Activated CD4-positive, alpha-beta T cell treated with anti-CD3 and anti-CD28 coated beads for 36 hours (primary cell): ENCODE measurements at regions of chr1 and their contacts with region 1.

Region 1: DNA sequence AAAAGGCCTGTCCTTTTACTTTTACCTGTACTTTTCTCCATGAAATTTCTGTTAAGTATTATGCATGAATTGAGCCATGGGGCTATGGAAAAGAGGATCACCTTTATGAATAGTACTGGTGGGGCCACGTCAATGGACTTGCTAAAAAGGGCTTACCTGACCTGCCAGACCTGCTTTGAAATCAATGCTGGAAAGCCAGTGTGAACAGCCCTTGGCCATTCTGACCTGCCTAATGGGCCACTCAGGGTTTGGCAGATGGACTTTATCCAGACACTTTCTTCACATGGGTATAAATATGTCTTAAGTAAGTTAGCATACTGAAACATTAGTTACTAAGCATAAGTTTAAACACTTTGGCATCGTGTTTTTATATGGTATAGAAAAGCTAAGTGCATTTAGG is 8.3 kb upstream of the GUK1 start:
- DNase-seq: no peak
- ATAC-seq: no peak
- H3K4me3 Mint-ChIP-seq: no peak overlapping the region
- H3K27ac Mint-ChIP-seq: no peak overlapping the region
- H3K4me1 Mint-ChIP-seq: peaks cover 3% of the 10 kb centered on the region
- H3K27me3 Mint-ChIP-seq: peaks cover 5% of the 10 kb centered on the region

Region 2: DNA sequence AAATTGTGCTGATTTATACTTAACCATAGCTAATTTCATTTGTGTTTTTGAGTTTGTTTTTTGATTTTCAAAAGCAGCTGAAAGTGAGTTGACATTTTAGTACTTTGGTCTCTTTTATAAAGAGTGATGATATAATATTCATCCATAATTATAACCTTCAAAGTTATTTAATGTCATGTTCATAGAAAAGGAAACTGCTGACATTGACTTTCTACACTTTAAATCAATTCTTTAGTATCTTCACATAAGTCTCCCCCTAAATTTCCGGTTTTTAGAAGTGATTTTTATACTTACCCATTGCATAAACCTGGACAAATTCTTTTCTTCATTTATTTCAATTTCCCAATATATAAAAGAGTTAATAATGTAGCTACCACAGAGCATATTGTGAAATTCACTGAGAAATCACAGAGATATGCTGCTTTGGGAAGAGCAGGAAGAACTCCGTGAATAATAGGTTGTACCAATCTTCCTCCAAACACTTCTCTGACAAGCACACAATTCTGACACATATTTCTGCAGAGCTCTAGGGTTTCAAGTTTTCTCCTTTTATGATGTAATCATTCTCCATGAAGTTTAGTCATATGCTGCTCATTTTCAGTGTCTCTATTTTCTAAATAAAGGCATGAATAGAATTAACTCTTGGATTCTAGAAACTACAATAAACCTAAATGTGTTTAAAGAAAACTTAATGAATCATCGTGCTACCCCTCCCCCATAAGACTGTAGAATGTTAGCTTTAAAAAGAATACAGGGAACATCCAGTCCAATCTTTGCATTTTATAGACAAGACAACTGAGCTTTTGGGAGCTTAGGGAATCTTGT is 787.8 kb before region 1 on chr1:
- CTCF ChIA-PET with region 1: no interaction called
- POLR2A ChIA-PET with region 1: no interaction called
- intact Hi-C with region 1: no loop called
- DNase-seq: no peak
- ATAC-seq: no peak
- H3K4me3 Mint-ChIP-seq: no peak overlapping the region
- H3K27ac Mint-ChIP-seq: no peak overlapping the region
- H3K4me1 Mint-ChIP-seq: no peaks in the 10 kb centered on the region
- H3K27me3 Mint-ChIP-seq: peaks cover 2% of the 10 kb centered on the region

Region 3: DNA sequence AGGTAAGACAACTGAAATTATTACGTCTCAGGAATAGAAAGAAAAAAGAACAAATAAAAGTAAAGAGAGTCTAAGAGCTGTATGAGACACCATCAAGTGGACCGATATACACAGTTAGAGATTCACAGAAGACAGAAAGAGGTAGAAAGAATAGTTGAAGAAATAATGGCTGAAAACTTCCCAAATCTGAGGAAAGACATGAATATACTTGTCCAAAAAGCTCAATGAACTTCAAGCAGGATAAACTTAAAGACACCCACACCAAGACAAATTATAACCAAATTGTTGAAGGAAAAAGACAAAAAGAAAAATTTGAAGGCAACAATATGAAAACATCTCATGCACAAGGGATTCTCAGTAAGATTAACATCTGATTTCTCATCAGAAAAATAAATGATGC is 144.6 kb before region 1 on chr1:
- CTCF ChIA-PET with region 1: no interaction called
- POLR2A ChIA-PET with region 1: no interaction called
- intact Hi-C with region 1: no loop called
- DNase-seq: no peak
- ATAC-seq: no peak
- H3K4me3 Mint-ChIP-seq: no peak overlapping the region
- H3K27ac Mint-ChIP-seq: no peak overlapping the region
- H3K4me1 Mint-ChIP-seq: no peaks in the 10 kb centered on the region
- H3K27me3 Mint-ChIP-seq: peaks cover 20% of the 10 kb centered on the region

Region 4: GRCh38 chr1:227999056-227999930 is 132.5 kb before region 1 on chr1:
- CTCF ChIA-PET with region 1: interaction called, 5 read pairs
- POLR2A ChIA-PET with region 1: no interaction called
- intact Hi-C with region 1: loop called in 1 of 2 experiments (anchors 1 kb)
- DNase-seq: peak; percentile 87
- ATAC-seq: peak; percentile 98
- H3K4me3 Mint-ChIP-seq: no peak overlapping the region
- H3K27ac Mint-ChIP-seq: no peak overlapping the region
- H3K4me1 Mint-ChIP-seq: no peaks in the 10 kb centered on the region
- H3K27me3 Mint-ChIP-seq: peaks cover 18% of the 10 kb centered on the region

Region 5: GRCh38 chr1:228120857-228121489 is 10.8 kb before region 1 on chr1:
- CTCF ChIA-PET with region 1: interaction called, 17 read pairs
- POLR2A ChIA-PET with region 1: no interaction called
- intact Hi-C with region 1: no loop called
- DNase-seq: no peak
- ATAC-seq: peak; percentile 81
- H3K4me3 Mint-ChIP-seq: peak overlapping the region; percentile 47
- H3K27ac Mint-ChIP-seq: peak overlapping the region; percentile 4
- H3K4me1 Mint-ChIP-seq: peaks cover 7% of the 10 kb centered on the region
- H3K27me3 Mint-ChIP-seq: no peaks in the 10 kb centered on the region

Region 6: DNA sequence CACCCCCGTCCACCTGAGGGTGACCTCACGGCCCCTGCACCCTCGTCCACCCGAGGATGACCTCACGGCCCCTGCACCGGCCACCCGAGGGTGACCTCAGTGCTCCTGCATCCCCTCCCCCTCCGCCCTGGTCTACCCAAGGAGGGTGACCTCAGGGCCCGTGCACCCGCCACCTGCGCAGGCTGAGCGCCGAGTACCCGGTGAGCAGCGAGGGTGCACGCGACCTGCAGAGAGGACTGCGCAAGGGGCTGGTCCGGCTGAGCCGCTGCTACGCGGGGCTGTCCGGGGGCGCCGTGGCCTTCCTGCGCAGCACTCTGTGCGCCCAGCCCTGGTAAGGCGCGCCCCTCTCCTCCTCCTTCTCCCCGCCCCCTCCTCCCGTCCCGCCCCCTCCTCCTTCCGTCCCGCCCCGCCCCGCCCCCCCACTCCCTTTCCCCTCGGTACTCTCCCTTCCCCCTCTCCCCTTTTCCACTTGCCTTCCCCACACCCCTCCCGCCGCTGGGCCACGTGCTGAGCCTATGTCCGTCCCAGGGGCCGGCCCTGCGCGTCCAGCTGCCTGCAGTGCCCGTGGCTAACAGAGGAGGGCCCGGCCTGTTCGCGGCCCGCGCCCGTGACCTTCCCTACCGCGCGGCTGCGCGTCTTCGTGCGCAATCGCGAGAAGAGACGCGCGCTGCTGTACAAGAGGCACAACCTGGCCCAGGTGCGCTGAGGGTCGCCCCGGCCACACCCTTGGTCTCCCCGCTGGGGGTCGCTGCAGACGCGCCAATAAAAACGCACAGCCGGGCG is 246.5 kb after region 1 on chr1:
- CTCF ChIA-PET with region 1: no interaction called
- POLR2A ChIA-PET with region 1: no interaction called
- intact Hi-C with region 1: loop called in 1 of 2 experiments (anchors 2 kb)
- DNase-seq: peak; percentile 84
- ATAC-seq: peak; percentile 77
- H3K4me3 Mint-ChIP-seq: peak overlapping the region; percentile 73
- H3K27ac Mint-ChIP-seq: no peak overlapping the region
- H3K4me1 Mint-ChIP-seq: peaks cover 8% of the 10 kb centered on the region
- H3K27me3 Mint-ChIP-seq: peaks cover 10% of the 10 kb centered on the region